Sciatic nerve (tissue), 2 donors: ENCODE measurements at regions of chr20 and their contacts with region 1.

Region 1: GRCh38 chr20:49610701-49611538 is 43.0 kb upstream of the PTGIS start:
- DNase-seq: peak; percentile 84
- ATAC-seq: peak; percentile 77

Region 2: GRCh38 chr20:49286689-49287551 is 324.0 kb before region 1 on chr20:
- intact Hi-C with region 1: no loop called
- DNase-seq: no peak
- ATAC-seq: no peak

Region 3: GRCh38 chr20:49395183-49395582 is 215.7 kb before region 1 on chr20:
- intact Hi-C with region 1: no loop called
- DNase-seq: peak; percentile 67
- ATAC-seq: peak; percentile 84

Region 4: GRCh38 chr20:49435659-49436058 is 175.3 kb before region 1 on chr20:
- intact Hi-C with region 1: no loop called
- DNase-seq: no peak
- ATAC-seq: no peak

Region 5: DNA sequence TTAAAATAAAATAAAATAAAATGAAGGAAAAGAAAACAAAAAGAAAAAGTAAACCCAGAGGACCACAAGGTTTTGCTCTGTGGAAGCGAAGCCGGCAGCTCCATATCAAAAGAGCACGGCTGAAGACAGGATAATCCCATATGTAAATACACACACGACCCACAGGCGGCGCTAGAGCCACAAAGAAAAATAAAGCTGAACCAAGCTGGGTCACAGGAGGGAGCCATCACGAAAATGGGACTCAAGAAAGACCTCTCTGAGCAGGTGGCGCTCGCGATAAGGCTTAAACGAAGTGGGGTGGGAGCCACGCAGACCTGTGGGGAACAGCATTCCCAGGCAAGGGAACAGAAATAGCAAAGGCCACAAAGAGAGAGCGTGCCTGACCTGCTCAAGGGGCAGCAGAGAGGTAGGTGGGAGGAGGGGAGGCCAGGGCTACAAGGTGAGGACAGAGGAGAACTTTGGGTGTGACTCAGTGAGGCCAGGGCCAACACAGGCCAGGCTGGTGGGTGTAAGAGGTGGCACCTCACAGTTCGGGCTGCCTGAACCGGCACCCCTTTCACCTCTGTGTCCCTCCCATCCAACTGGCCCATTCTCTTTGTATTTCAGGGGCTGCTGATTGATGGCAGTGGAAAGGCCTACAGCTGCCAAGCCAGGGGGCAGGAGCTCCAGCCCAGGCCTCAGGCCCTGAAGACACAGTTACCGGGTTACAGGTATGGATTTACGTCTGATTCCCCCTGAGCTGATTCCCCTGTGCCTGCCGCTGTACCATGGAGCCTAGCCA is 69.0 kb before region 1 on chr20:
- intact Hi-C with region 1: loop called (anchors 5 kb)
- DNase-seq: peak; percentile 75
- ATAC-seq: peak; percentile 74

Region 6: DNA sequence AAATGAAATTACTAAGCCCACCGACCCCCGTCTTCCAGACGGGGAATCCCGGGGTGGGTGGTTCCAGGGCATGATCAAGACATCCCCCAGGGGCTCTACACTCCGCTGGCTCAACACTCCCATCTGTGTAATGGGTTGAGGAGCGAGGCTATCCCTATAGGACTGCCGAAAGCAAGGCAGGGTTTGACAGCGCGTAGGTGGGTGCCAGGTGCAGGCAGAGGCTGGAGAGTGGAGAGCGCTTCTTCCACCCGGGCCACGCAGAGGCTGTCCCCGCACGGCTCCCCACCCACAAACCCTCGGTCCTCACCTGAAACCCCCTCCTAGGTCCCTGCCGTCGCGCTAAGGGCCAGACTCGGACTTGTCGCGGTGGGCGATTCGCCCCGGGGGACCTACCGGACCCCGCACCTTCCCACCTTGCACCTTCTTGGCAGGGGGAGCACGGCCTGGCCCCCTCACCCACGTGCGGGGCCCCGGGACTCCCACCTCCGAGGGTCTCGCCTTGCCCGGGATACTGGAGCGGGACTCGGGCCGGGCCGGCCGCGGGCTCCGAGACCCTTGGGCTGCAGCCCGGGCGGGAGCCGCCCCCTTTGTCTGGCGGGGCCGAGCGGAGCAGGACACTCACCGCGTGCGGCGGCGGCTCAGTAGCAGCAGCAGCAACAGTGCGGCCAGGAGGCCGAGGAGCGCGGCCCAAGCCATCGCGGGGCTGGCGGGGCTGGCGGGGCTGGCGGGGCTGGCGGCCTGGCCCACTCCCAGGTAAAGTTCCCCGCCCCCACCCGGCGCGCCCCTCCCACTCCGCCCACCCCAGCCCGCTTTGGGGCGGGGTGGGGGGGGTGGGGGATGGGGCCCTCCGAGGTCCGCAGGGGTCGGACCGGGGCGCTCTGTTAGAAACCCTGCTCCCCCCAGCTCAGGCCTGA is 43.2 kb before region 1 on chr20 and contains the start of gene PTGIS:
- intact Hi-C with region 1: no loop called
- DNase-seq: peak; percentile 65
- ATAC-seq: peak; percentile 7
- total RNA-seq, gene PTGIS: 89.7 TPM

Region 7: DNA sequence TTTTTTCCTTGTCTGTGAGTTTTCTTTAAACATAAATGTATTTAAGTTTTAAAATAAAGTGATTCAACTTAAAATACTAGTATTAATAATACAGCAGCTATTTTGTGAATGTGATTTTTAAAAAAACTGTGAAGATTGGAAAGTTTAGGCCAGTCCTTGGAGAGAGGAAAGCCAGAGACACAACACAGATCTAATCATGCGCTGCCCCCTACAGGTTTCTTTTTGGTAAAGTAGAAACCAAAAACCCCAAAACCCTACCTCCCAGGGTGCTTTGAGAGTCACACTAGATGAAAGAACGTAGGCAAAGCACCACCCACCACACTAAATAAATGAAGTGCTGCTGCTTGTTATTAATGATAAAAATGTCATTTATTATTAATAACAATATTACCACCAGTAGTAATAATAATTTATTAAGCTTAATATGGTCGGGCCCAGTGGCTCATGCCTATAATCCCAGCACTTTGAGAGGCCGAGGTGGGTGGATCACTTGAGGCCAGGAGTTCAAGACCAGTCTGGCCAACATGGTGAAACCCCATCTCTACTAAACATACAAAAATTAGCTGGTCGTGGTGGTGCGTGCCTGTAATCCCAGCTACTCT is 235.4 kb after region 1 on chr20:
- intact Hi-C with region 1: loop called (anchors 5 kb)
- DNase-seq: no peak
- ATAC-seq: peak; percentile 78

Region 8: GRCh38 chr20:49915378-49916145 is 304.6 kb after region 1 on chr20 and contains the start of gene SPATA2:
- intact Hi-C with region 1: loop called (anchors 10 kb)
- DNase-seq: peak; percentile 98
- ATAC-seq: peak; percentile 98
- total RNA-seq, gene SPATA2: 8.2 TPM